Pancreas (tissue), 10 donors: ENCODE measurements at regions of chr15 and their contacts with region 1.

Region 1: DNA sequence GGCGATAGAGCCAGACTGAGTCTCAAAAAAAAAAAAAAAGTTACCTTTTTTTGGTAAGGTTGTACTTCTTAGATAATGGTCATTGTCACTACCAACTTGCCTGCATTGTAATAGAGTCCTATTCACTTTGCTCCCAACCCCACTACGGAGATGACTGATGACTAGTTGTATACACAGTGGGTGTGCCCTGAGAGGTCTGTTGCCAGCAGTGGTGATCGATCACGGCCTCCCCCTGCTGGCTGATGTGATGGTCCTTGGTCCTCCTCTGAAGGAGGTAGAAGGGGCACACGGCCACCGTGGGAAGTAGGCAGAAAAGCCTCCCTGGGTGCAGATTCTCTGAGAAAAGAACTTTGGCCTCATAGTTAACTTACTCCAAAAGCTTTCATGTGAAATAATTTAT is 10.7 kb downstream of the GCNT3 start:
- DNase-seq: peak in 3 of 6 donors; percentile 26 to 61 (median 30)
- ATAC-seq: peak in 3 of 4 donors; percentile 60 to 83 (median 79)
- H3K4me3 ChIP-seq: no peak overlapping the region
- H3K27ac ChIP-seq: no peak overlapping the region
- H3K4me1 ChIP-seq: no peaks in the 10 kb centered on the region
- H3K27me3 ChIP-seq: no peaks in the 10 kb centered on the region
- CTCF ChIP-seq: no peak

Region 2: GRCh38 chr15:59532770-59533379 is 89.4 kb before region 1 on chr15:
- intact Hi-C with region 1: loop called in 1 of 3 experiments (anchors 10 kb)
- DNase-seq: no peak
- ATAC-seq: peak in 3 of 4 donors; percentile 53 to 67 (median 57)
- H3K4me3 ChIP-seq: no peak overlapping the region
- H3K27ac ChIP-seq: no peak overlapping the region
- H3K4me1 ChIP-seq: peaks cover 0 to 3% (median 0%) of the 10 kb centered on the region in 3 donors
- H3K27me3 ChIP-seq: no peaks in the 10 kb centered on the region
- CTCF ChIP-seq: peak in 3 of 4 donors; percentile 24 to 64 (median 43)

Region 3: DNA sequence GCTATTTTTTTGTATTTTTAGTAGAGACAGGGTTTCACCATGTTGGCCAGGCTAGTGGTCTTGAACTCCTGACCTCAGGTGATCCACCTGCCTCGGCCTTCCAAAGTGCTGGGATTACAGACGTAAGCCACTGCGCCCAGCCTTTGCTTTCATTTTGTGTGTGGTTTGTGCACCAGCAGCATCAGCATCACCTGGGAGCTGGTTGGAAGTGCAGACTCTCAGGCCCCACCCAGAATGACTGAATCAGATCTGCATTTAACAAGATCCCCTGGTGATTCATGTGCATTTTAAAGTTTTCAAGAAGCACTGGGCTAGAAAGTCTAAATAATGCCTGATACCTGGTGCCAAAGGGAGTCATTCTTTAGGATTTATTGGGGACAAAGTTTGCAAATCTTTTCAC is 140.3 kb after region 1 on chr15:
- intact Hi-C with region 1: no loop called
- DNase-seq: no peak
- ATAC-seq: no peak
- H3K4me3 ChIP-seq: no peak overlapping the region
- H3K27ac ChIP-seq: no peak overlapping the region
- H3K4me1 ChIP-seq: no peaks in the 10 kb centered on the region
- H3K27me3 ChIP-seq: peaks cover 0 to 3% (median 0%) of the 10 kb centered on the region in 4 donors
- CTCF ChIP-seq: no peak